Sigmoid colon (tissue), 7 donors: ENCODE measurements at regions of chr14 and their contacts with region 1.

Region 1: DNA sequence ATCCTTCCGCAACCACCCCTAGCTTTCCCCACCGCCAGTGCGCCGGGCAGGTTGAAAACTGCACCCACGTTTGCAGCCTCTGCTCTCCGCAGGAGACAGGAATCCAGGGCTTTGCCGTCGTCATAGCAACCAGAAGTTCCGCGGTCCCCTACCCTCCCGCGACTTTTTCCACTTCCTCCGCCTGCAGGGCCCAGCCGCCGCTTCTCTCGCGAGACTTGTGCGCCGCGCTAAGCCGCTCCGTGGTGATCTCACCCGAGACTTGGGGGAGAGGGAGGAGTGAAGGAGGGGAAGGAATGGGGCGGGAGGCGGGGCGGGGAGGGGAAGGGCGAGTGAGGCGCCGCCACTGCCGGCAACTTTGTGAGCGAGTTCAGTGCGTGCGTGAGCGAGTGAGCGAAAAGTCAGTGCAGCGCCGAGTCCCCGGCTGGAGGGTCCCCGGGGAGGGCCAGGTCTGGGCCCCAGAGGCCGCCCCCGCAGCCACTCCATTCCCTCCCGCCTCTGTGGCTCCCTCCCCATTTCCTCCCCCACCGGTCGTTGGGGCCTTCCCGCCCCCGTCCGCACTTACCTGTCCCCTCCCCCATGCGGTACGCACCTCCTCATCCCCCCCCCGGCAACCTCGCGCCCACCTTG is 413.0 kb downstream of the PCNX1 start:
- DNase-seq: peak; percentile 99
- H3K4me3 ChIP-seq: peak within 1 kb of the TSS; percentile 90 to 97 (median 96)
- H3K27ac ChIP-seq: peak within 1 kb of the TSS; percentile 98 to 100 (median 99)
- H3K4me1 ChIP-seq: peaks cover 0 to 38% (median 25%) of the 10 kb centered on the region in 4 donors
- H3K27me3 ChIP-seq: no peaks in the 10 kb centered on the region
- CTCF ChIP-seq: no peak
- EP300 ChIP-seq: no peak
- POLR2A ChIP-seq: peak; percentile 88 to 89

Region 2: GRCh38 chr14:71138448-71139293 is 181.5 kb before region 1 on chr14:
- intact Hi-C with region 1: loop called (anchors 5 kb)
- DNase-seq: no peak
- H3K4me3 ChIP-seq: no peak overlapping the region
- H3K27ac ChIP-seq: no peak overlapping the region
- H3K4me1 ChIP-seq: peaks cover 0 to 13% (median 4%) of the 10 kb centered on the region in 4 donors
- H3K27me3 ChIP-seq: no peaks in the 10 kb centered on the region
- CTCF ChIP-seq: peak; percentile 77 to 95 (median 90)
- EP300 ChIP-seq: no peak
- POLR2A ChIP-seq: no peak

Region 3: GRCh38 chr14:71403656-71404055 is 83.4 kb after region 1 on chr14:
- intact Hi-C with region 1: loop called (anchors 5 kb)
- DNase-seq: no peak
- H3K4me3 ChIP-seq: no peak overlapping the region
- H3K27ac ChIP-seq: no peak overlapping the region
- H3K4me1 ChIP-seq: peaks cover 0 to 23% (median 4%) of the 10 kb centered on the region in 4 donors
- H3K27me3 ChIP-seq: no peaks in the 10 kb centered on the region
- CTCF ChIP-seq: no peak
- EP300 ChIP-seq: no peak
- POLR2A ChIP-seq: no peak

Region 4: GRCh38 chr14:71620401-71620800 is 300.2 kb after region 1 on chr14:
- intact Hi-C with region 1: loop called (anchors 10 kb)
- DNase-seq: no peak
- H3K4me3 ChIP-seq: no peak overlapping the region
- H3K27ac ChIP-seq: no peak overlapping the region
- H3K4me1 ChIP-seq: no peaks in the 10 kb centered on the region
- H3K27me3 ChIP-seq: no peaks in the 10 kb centered on the region
- CTCF ChIP-seq: no peak
- EP300 ChIP-seq: no peak
- POLR2A ChIP-seq: no peak

Region 5: GRCh38 chr14:71753126-71753830 is 433.1 kb after region 1 on chr14:
- intact Hi-C with region 1: loop called (anchors 2 kb)
- DNase-seq: peak; percentile 92
- H3K4me3 ChIP-seq: peak overlapping the region in 3 of 4 donors; percentile 4 to 13 (median 6)
- H3K27ac ChIP-seq: no peak overlapping the region
- H3K4me1 ChIP-seq: peaks cover 0 to 10% (median 8%) of the 10 kb centered on the region in 4 donors
- H3K27me3 ChIP-seq: no peaks in the 10 kb centered on the region
- CTCF ChIP-seq: peak; percentile 84 to 92 (median 85)
- EP300 ChIP-seq: no peak
- POLR2A ChIP-seq: no peak